Activated CD4-positive, alpha-beta memory T cell treated with anti-CD3 and anti-CD28 coated beads for 36 hours (primary cell): ENCODE measurements at regions of chr19 and their contacts with region 1.

Region 1: DNA sequence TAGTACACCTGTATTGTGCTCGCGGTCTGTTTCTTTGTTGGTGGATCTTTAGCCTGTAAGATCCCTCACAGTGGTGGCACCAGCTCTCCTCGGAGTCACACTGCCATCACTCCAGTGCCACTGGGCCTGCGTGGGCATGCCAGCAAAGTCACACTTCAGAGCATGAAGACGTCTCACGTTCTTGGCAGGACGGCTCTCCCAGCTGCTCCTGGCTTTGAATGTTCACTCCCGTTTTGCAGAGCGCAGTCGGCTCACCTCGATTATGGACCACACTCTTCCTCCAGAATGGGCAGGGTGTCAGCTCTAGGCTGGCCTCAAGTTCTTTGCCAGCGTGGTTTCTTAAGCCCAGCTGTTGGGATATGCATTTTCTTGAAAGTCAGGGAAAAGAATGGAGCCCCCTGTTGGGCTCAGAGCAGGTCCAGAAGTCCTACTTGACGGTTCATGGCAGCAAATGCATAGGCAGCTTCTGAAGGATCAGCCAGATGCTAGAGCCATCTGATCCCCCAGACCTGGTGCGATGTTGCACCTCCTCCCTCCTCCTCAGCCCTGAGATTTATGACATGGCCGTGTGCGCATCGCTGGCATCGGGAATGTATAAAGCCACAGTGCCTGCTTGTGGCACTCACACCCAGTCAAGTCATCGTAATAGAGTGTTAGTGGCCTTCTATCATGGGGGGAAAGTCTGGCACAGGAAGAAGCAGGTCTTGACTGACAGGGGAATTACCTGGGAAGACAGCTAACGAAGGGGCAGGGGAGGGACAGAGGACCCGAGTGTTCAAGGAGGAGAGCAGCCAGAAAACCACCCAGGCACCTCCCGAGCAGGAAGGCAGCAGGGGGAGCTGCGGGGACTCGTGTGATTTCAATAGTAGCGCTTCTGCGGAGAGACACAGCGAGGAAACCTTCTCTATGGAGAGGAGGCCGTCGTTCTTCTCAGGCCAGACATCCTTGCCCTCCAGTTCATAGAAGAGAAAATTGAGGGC is 40.2 kb upstream of the NPAS1 start:
- DNase-seq: no peak
- H3K4me3 Mint-ChIP-seq: no peak overlapping the region
- H3K27ac Mint-ChIP-seq: no peak overlapping the region
- H3K4me1 Mint-ChIP-seq: peaks cover 18% of the 10 kb centered on the region
- H3K27me3 Mint-ChIP-seq: no peaks in the 10 kb centered on the region

Region 2: DNA sequence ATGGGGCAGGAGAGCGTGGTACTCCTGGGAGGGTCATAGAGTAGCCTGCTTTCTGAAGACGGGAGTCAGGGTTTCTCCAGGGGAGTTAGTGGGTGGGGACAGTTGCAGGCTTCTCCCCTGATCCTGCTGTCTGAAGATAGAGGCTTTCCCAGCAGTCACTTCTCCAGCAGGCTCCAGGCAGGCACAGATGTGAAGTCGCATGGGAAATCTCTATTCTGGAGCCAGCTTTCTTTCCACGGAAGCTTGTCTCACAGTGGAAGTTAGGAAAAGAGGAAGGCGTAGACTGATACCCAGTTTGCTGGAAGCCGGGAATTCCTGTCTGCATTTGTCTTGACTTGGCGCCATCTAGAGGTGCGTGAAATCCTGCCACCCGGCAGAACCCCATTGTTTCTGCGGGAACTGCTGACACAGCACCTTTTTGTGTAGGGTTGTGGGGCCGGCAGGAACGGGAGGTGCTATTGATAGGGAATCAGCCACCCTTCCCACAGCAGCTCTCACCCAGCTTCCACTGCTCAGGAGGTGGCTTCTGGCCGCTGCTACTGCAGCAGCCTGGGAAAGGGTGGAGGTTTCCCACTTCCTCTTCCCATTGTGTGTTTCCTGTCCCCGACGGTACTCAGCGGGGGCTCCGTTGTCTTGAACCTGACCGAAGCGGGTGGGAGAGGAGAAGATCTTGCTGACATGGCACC is 11.7 kb after region 1 on chr19:
- CTCF ChIA-PET with region 1: interaction called, 10 read pairs
- POLR2A ChIA-PET with region 1: no interaction called
- intact Hi-C with region 1: no loop called
- DNase-seq: peak; percentile 76
- H3K4me3 Mint-ChIP-seq: no peak overlapping the region
- H3K27ac Mint-ChIP-seq: peak overlapping the region; percentile 34
- H3K4me1 Mint-ChIP-seq: peaks cover 10% of the 10 kb centered on the region
- H3K27me3 Mint-ChIP-seq: no peaks in the 10 kb centered on the region

Region 3: DNA sequence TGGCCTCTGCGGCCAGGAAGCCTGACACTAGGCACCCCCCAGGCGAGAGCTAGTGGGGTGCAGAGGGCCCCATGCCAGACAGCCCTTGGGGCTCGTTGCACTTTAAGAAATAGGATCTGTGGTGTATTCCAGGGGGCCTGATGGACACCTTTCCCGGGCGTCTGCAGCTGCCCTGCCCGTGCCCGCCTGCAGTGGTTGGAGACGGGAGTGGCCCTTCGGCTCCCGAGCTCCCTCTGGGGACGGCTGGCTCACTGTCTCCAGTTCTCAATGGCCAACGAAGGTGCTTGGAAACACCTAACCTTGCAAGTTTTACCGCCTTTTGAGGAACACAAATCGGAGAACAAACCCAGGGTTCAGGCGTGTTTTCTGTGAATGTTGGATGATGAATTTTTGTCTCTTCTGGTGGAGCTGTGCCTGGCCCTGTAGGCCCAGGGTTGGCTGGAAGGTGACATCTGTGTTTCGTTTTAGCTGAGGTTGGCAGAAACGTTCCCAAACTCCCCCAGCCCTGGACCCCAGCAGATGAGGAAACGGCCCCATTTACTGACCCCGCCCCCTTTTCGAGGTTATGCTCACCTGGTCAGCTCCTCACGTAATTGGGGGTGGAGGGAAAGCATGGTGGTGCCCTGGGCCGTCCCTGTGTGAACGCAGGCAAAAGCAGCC is 22.8 kb after region 1 on chr19:
- CTCF ChIA-PET with region 1: no interaction called
- POLR2A ChIA-PET with region 1: no interaction called
- intact Hi-C with region 1: no loop called
- DNase-seq: no peak
- H3K4me3 Mint-ChIP-seq: no peak overlapping the region
- H3K27ac Mint-ChIP-seq: no peak overlapping the region
- H3K4me1 Mint-ChIP-seq: no peaks in the 10 kb centered on the region
- H3K27me3 Mint-ChIP-seq: no peaks in the 10 kb centered on the region

Region 4: GRCh38 chr19:47047763-47048405 is 68.5 kb after region 1 on chr19:
- CTCF ChIA-PET with region 1: no interaction called
- POLR2A ChIA-PET with region 1: no interaction called
- intact Hi-C with region 1: no loop called
- DNase-seq: peak; percentile 91
- H3K4me3 Mint-ChIP-seq: peak overlapping the region; percentile 99
- H3K27ac Mint-ChIP-seq: peak overlapping the region; percentile 87
- H3K4me1 Mint-ChIP-seq: peaks cover 12% of the 10 kb centered on the region
- H3K27me3 Mint-ChIP-seq: peaks cover 1% of the 10 kb centered on the region